CD8-positive, alpha-beta T cell (primary cell): ENCODE measurements at regions of chr3 and their contacts with region 1.

Region 1: GRCh38 chr3:42961633-42962032 is 17.5 kb upstream of the GASK1A start:
- DNase-seq: peak in 4 of 9 experiments; percentile 24 to 65 (median 42)
- ATAC-seq: no peak
- H3K4me3 ChIP-seq: no peak overlapping the region
- H3K4me3 Mint-ChIP-seq: no peak overlapping the region
- H3K27ac ChIP-seq: no peak overlapping the region
- H3K27ac Mint-ChIP-seq: no peak overlapping the region
- H3K4me1 ChIP-seq: peaks cover 20% of the 10 kb centered on the region
- H3K4me1 Mint-ChIP-seq: peaks cover 29% of the 10 kb centered on the region
- H3K27me3 ChIP-seq: no peaks in the 10 kb centered on the region
- H3K27me3 Mint-ChIP-seq: no peaks in the 10 kb centered on the region
- CTCF ChIP-seq: peak; percentile 53

Region 2: GRCh38 chr3:43062564-43063040 is 101.0 kb after region 1 on chr3:
- CTCF ChIA-PET with region 1: interaction called, 22 read pairs
- POLR2A ChIA-PET with region 1: no interaction called
- intact Hi-C with region 1: no loop called
- DNase-seq: no peak
- ATAC-seq: no peak
- H3K4me3 ChIP-seq: no peak overlapping the region
- H3K4me3 Mint-ChIP-seq: no peak overlapping the region
- H3K27ac ChIP-seq: no peak overlapping the region
- H3K27ac Mint-ChIP-seq: no peak overlapping the region
- H3K4me1 ChIP-seq: peaks cover 21% of the 10 kb centered on the region
- H3K4me1 Mint-ChIP-seq: peaks cover 25% of the 10 kb centered on the region
- H3K27me3 ChIP-seq: no peaks in the 10 kb centered on the region
- H3K27me3 Mint-ChIP-seq: no peaks in the 10 kb centered on the region
- CTCF ChIP-seq: no peak

Region 3: GRCh38 chr3:43087249-43087776 is 125.7 kb after region 1 on chr3:
- CTCF ChIA-PET with region 1: interaction called, 77 read pairs
- POLR2A ChIA-PET with region 1: interaction called, 4 read pairs
- intact Hi-C with region 1: loop called (anchors 1 to 5 kb)
- DNase-seq: peak in 3 of 9 experiments; percentile 9 to 26 (median 23)
- ATAC-seq: no peak
- H3K4me3 ChIP-seq: no peak overlapping the region
- H3K4me3 Mint-ChIP-seq: no peak overlapping the region
- H3K27ac ChIP-seq: no peak overlapping the region
- H3K27ac Mint-ChIP-seq: no peak overlapping the region
- H3K4me1 ChIP-seq: no peaks in the 10 kb centered on the region
- H3K4me1 Mint-ChIP-seq: peaks cover 15% of the 10 kb centered on the region
- H3K27me3 ChIP-seq: no peaks in the 10 kb centered on the region
- H3K27me3 Mint-ChIP-seq: no peaks in the 10 kb centered on the region
- CTCF ChIP-seq: no peak

Region 4: DNA sequence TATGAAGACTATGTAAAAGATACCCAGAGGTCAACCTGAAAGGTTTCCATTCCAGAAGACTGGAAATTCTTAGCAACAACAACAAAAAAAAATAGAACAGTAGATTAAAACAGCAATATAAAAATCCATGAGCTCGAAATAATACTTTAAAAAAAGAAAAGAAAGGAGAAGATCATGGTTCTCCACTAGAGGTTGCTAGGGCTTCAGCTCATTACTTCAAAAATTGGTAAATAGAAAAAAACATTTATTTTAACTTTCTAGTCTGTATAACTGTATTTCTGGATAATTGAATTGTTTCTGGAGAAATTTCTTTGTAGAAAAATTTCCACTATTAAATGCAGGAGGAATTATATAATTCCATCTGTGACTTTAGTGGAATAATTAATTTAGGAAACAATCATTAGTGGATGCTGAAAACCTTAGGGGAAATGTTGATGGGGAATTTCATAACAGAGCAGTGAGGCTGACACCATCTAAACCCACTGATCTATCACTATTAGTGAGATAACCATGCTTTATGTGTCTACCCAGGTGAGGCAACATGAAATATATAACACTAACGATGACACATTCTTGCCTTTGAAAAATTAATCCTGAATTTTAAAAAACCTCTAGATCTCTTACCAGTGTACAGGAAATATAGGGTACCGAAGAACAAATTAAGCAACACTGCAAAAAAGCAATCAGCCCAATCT is 262.2 kb after region 1 on chr3:
- CTCF ChIA-PET with region 1: interaction called, 15 read pairs
- POLR2A ChIA-PET with region 1: interaction called, 3 read pairs
- intact Hi-C with region 1: loop called in 1 of 2 experiments (anchors 2 kb)
- DNase-seq: peak in 2 of 9 experiments; percentile 50 to 58
- ATAC-seq: peak; percentile 30
- H3K4me3 ChIP-seq: no peak overlapping the region
- H3K4me3 Mint-ChIP-seq: no peak overlapping the region
- H3K27ac ChIP-seq: no peak overlapping the region
- H3K27ac Mint-ChIP-seq: peak overlapping the region; percentile 81
- H3K4me1 ChIP-seq: peaks cover 58% of the 10 kb centered on the region
- H3K4me1 Mint-ChIP-seq: peaks cover 64% of the 10 kb centered on the region
- H3K27me3 ChIP-seq: no peaks in the 10 kb centered on the region
- H3K27me3 Mint-ChIP-seq: no peaks in the 10 kb centered on the region
- CTCF ChIP-seq: peak; percentile 78

Region 5: DNA sequence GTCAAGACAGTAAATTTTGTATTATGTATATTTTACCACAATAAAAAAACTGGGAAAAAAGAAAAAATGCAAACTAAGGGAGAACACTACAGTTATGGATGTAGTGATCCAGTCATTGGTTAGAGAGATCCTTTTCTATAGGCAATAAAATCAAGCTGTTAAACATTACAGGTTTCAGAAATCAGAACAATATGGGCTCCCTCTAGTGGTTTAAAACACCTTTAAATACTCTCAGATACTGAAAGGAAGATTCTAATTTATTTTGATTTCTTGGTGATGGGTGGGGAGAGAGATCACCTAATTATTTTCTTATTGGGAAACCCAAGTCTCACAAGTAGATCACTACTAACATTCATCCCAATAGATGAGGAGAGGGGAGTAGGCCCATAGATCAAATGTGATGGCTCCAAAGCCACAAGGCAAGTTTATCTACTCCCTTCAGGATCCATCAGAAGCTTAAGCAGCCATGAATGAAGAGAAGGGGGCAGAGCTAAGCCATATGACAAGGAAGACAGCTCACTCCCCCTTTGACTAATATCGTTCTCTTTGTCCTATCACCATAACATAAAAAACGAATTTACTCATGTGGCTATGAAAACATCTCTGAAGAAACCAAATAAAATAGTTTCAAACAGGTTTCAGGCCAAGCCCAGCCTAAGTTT is 541.6 kb after region 1 on chr3:
- CTCF ChIA-PET with region 1: interaction called, 43 read pairs
- POLR2A ChIA-PET with region 1: no interaction called
- intact Hi-C with region 1: loop called (anchors 2 to 5 kb)
- DNase-seq: peak in 2 of 9 experiments; percentile 57 to 72
- ATAC-seq: peak; percentile 60
- H3K4me3 ChIP-seq: no peak overlapping the region
- H3K4me3 Mint-ChIP-seq: no peak overlapping the region
- H3K27ac ChIP-seq: no peak overlapping the region
- H3K27ac Mint-ChIP-seq: no peak overlapping the region
- H3K4me1 ChIP-seq: peaks cover 42% of the 10 kb centered on the region
- H3K4me1 Mint-ChIP-seq: peaks cover 54% of the 10 kb centered on the region
- H3K27me3 ChIP-seq: no peaks in the 10 kb centered on the region
- H3K27me3 Mint-ChIP-seq: no peaks in the 10 kb centered on the region
- CTCF ChIP-seq: peak; percentile 65